Activated naive CD4-positive, alpha-beta T cell treated with anti-CD3 and anti-CD28 coated beads for 36 hours (primary cell): ENCODE measurements at regions of chr4 and their contacts with region 1.

Region 1: DNA sequence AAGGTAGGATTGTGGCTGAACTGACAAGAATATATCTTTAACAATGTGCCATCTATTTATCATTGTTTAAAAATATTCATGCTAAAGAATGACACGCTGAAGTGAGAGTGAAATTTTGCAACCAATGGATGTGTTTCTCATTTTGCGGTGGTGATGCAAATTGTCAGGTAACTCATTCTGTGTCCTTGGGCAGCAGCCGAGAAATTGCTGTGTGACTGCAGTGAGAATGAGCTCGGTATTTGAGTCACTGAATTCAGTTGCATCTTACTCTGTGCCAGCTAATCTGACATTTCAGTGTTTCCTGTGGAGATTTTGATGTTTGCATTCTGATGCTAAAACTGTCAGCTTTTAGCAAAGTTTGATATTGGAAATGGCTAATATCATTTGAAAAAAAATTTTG is 28.1 kb downstream of the MCUB start:
- DNase-seq: peak; percentile 88
- H3K4me3 Mint-ChIP-seq: peak overlapping the region; percentile 46
- H3K27ac Mint-ChIP-seq: peak overlapping the region; percentile 78
- H3K4me1 Mint-ChIP-seq: peaks cover 85% of the 10 kb centered on the region
- H3K27me3 Mint-ChIP-seq: no peaks in the 10 kb centered on the region

Region 2: DNA sequence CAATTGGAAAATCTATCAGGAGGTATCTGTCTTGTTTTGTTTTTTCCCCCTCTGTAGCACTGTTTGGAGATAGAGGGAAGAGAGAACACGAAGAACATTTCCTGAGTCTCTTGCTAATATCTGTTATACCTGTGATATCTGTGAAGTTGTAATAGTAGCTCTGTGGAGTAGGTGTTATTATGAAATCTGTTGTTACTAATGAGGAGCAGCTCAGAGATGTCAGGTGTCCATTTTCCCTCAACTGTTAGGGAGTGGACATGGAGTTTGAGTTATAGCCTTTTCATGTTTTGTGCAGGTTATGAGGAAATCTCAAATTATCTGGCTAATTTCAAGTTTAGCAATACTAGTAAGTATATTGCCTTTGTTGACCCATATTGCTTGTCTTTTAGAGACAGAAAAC is 102.2 kb before region 1 on chr4:
- CTCF ChIA-PET with region 1: no interaction called
- intact Hi-C with region 1: no loop called
- DNase-seq: no peak
- H3K4me3 Mint-ChIP-seq: no peak overlapping the region
- H3K27ac Mint-ChIP-seq: no peak overlapping the region
- H3K4me1 Mint-ChIP-seq: peaks cover 2% of the 10 kb centered on the region
- H3K27me3 Mint-ChIP-seq: no peaks in the 10 kb centered on the region

Region 3: DNA sequence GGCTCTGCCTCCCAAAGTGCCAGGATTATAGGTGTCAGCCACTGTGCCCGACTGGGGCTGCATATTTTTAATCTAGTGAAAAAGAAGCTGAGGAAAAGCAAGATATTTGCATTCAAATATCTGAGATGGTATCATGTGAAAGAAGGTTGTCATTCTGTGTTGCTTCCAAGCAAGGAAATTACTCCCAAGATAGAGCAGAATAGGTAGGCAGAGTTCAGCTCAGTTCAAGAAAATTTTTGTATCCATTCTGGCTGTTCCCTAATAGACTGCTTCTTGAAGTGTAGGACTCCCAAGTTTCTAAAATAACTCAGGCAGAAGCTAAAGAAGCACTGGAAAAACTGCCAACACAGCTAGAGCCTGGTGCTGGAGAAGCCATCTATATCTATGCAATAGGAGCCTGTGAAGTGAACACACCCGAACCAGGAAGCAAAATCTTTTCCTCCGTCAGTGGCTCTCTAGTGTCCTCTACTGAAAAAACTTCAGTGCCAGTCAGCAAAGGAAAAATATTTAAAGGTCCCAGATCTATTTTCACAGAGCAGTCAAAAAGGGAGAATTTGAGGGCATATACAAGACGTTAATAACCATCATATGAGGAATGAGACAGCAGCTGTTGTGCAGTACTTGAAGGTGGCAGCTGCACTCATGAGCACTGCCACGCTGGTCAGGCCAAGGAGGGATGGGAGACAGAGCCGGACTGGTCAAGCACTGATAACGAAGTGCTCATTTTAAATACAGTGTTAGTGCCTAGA is 13.9 kb before region 1 on chr4:
- CTCF ChIA-PET with region 1: interaction called, 12 read pairs
- intact Hi-C with region 1: no loop called
- DNase-seq: peak; percentile 42
- H3K4me3 Mint-ChIP-seq: peak overlapping the region; percentile 39
- H3K27ac Mint-ChIP-seq: no peak overlapping the region
- H3K4me1 Mint-ChIP-seq: peaks cover 74% of the 10 kb centered on the region
- H3K27me3 Mint-ChIP-seq: no peaks in the 10 kb centered on the region

Region 4: GRCh38 chr4:109611045-109611646 is 23.0 kb after region 1 on chr4:
- CTCF ChIA-PET with region 1: no interaction called
- intact Hi-C with region 1: loop called (anchors 1 kb)
- DNase-seq: no peak
- H3K4me3 Mint-ChIP-seq: no peak overlapping the region
- H3K27ac Mint-ChIP-seq: no peak overlapping the region
- H3K4me1 Mint-ChIP-seq: peaks cover 74% of the 10 kb centered on the region
- H3K27me3 Mint-ChIP-seq: no peaks in the 10 kb centered on the region

Region 5: DNA sequence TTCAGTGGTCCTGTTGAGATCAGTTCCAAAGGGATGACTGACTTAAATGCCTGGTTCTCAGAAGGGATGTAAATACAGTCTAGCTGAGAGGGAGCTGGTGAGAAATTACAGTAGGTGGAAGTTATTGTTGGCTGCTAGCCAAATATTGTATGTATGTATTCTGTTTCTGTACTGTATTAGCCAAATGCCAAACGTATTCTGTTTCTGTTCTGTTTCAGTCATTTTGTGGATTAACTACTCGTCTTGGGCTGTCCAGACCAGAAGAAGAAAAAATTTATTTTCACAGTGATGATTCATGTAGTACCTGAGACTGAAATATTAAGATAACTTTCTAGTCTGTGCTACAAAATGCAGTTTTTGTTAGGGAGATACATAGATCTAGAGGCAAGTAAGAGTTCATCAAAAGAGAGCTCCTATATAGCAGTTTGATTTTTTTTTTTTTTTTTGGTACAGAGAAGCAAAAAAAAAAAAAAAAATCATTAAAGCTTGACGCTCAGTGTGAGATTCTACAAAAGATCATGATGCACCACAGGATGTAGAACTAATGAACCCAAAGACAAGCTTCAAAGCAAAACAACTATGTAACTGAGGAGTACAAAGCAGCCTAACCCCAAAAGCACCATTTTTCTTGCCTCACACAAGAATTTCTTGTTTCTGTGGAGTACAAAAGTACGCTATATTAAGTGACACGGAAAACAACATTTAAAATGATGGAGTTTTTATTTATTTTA is 60.3 kb after region 1 on chr4:
- CTCF ChIA-PET with region 1: no interaction called
- intact Hi-C with region 1: loop called (anchors 1 kb)
- DNase-seq: no peak
- H3K4me3 Mint-ChIP-seq: peak overlapping the region; percentile 59
- H3K27ac Mint-ChIP-seq: peak overlapping the region; percentile 77
- H3K4me1 Mint-ChIP-seq: peaks cover 45% of the 10 kb centered on the region
- H3K27me3 Mint-ChIP-seq: no peaks in the 10 kb centered on the region

Region 6: GRCh38 chr4:109815151-109816081 is 227.2 kb after region 1 on chr4 and contains the start of gene GAR1:
- CTCF ChIA-PET with region 1: no interaction called
- intact Hi-C with region 1: loop called (anchors 2 kb)
- DNase-seq: peak; percentile 93
- H3K4me3 Mint-ChIP-seq: peak within 1 kb of the TSS; percentile 99
- H3K27ac Mint-ChIP-seq: peak within 1 kb of the TSS; percentile 95
- H3K4me1 Mint-ChIP-seq: peaks cover 47% of the 10 kb centered on the region
- H3K27me3 Mint-ChIP-seq: no peaks in the 10 kb centered on the region
- total RNA-seq, gene GAR1: 18.9 to 24.4 TPM

Region 7: GRCh38 chr4:110087070-110087708 is 499.0 kb after region 1 on chr4:
- CTCF ChIA-PET with region 1: no interaction called
- intact Hi-C with region 1: loop called (anchors 5 kb)
- DNase-seq: no peak
- H3K4me3 Mint-ChIP-seq: no peak overlapping the region
- H3K27ac Mint-ChIP-seq: peak overlapping the region; percentile 18
- H3K4me1 Mint-ChIP-seq: peaks cover 56% of the 10 kb centered on the region
- H3K27me3 Mint-ChIP-seq: no peaks in the 10 kb centered on the region